Heart right ventricle (tissue), 16 donors: ENCODE measurements at regions of chr7 and their contacts with region 1.

Region 1: GRCh38 chr7:77536413-77537135 is 521 bp upstream of the PTPN12 start:
- DNase-seq: peak; percentile 97 to 99
- ATAC-seq: peak; percentile 91 to 96 (median 94)
- H3K4me3 ChIP-seq: peak overlapping the region; percentile 77 to 100 (median 94)
- H3K27ac ChIP-seq: peak overlapping the region; percentile 48 to 100 (median 99)
- H3K4me1 ChIP-seq: peaks cover 6 to 40% (median 34%) of the 10 kb centered on the region in 9 donors
- H3K27me3 ChIP-seq: no peaks in the 10 kb centered on the region
- CTCF ChIP-seq: peak in 1 of 9 donors; percentile 18

Region 2: DNA sequence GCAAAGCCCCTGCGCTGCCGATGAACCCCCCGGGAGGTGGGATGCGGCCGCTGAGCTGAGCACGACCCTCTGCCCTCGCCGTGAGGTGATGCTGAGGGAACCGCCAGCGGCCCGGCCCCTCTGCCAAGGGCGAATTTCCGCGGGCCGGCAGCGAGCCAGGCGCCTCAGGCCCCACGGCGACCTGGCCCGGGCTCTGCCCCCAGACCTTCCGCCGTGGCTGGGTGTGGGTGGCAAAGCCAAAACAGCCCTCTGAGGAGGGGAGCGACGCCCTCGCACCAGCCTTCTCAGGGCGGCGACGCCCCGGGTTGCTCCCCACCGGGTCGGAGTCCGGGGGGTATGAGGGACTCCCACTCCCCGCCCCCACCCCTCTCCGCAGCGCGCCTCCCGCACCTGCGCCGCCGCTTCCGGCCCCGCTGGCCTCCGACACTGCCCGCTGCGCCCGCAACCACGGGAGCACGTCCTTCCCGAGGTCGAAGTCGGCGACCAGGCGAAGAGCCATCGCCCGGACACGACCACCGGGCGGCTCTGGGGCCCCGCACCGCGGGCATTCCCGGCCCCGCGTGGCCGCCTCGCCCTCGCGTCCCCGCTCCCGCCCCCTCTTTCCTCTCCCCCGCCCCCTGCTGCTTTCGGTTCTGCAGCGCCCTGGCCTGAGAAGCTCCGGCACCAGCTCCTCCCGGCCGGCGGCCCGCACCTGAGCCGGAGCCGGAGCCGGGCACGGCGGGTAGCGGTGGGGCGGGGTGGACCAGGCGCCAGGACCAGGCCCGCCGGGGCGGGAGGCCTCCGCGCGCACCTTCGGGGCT is 120.6 kb before region 1 on chr7 and contains the start of gene GSAP:
- intact Hi-C with region 1: loop called in 1 of 10 experiments (anchors 10 kb)
- DNase-seq: peak; percentile 67
- ATAC-seq: peak; percentile 70 to 91 (median 88)
- H3K4me3 ChIP-seq: peak within 1 kb of the TSS; percentile 73 to 92 (median 86)
- H3K27ac ChIP-seq: peak within 1 kb of the TSS; percentile 68 to 96 (median 87)
- H3K4me1 ChIP-seq: peaks cover 0 to 39% (median 12%) of the 10 kb centered on the region in 9 donors
- H3K27me3 ChIP-seq: no peaks in the 10 kb centered on the region
- CTCF ChIP-seq: peak in 5 of 9 donors; percentile 10 to 40 (median 20)
- total RNA-seq, gene GSAP: 5.2 to 13.5 (median 7.9) TPM

Region 3: GRCh38 chr7:77455324-77455723 is 81.2 kb before region 1 on chr7:
- intact Hi-C with region 1: loop called in 1 of 10 experiments (anchors 10 kb)
- DNase-seq: peak; percentile 19 to 43
- ATAC-seq: peak in 7 of 8 donors; percentile 55 to 93 (median 75)
- H3K4me3 ChIP-seq: no peak overlapping the region
- H3K27ac ChIP-seq: peak overlapping the region in 2 of 10 donors; percentile 2 to 19
- H3K4me1 ChIP-seq: peaks cover 0 to 39% (median 9%) of the 10 kb centered on the region in 9 donors
- H3K27me3 ChIP-seq: no peaks in the 10 kb centered on the region
- CTCF ChIP-seq: no peak

Region 4: DNA sequence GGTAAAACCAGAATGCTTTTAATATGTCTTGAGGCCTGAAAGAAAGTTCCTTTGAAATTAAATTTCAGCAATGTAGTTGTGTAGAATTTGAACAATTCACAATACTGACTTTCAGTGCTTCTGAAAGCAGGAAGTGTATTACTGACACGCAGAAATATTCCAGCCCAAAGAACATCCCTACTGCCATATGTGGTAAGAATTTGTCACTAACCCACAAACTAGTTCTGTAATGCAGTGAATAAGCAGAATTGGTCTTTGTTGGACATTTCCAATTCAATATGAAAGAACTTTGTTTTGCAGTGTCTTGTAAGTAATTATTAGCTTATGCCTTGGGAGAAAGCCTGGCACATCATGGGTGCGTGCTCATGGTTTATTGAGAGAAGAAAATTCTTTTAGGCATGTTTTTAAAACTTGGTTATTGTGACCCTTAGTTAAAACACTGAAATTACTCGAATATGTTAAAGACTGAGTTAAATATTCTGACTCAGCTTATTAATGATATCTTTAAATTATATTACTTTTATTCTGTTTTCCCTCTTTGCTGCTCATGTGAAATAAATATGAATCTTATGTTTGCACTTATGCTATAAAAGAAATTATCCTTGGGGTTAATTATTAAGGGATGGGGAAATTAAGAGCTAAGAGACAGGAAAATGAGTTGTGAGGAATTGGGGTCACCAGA is 33.9 kb after region 1 on chr7:
- intact Hi-C with region 1: loop called in 2 of 10 experiments (anchors 5 kb)
- DNase-seq: no peak
- ATAC-seq: peak in 4 of 8 donors; percentile 54 to 66 (median 59)
- H3K4me3 ChIP-seq: no peak overlapping the region
- H3K27ac ChIP-seq: peak overlapping the region in 3 of 10 donors; percentile 7 to 69 (median 12)
- H3K4me1 ChIP-seq: peaks cover 0 to 63% (median 28%) of the 10 kb centered on the region in 9 donors
- H3K27me3 ChIP-seq: no peaks in the 10 kb centered on the region
- CTCF ChIP-seq: no peak

Region 5: GRCh38 chr7:77600952-77601351 is 64.4 kb after region 1 on chr7:
- intact Hi-C with region 1: loop called in 1 of 10 experiments (anchors 5 kb)
- DNase-seq: no peak
- ATAC-seq: no peak
- H3K4me3 ChIP-seq: no peak overlapping the region
- H3K27ac ChIP-seq: no peak overlapping the region
- H3K4me1 ChIP-seq: peaks cover 0 to 5% (median 0%) of the 10 kb centered on the region in 9 donors
- H3K27me3 ChIP-seq: no peaks in the 10 kb centered on the region
- CTCF ChIP-seq: no peak

Region 6: DNA sequence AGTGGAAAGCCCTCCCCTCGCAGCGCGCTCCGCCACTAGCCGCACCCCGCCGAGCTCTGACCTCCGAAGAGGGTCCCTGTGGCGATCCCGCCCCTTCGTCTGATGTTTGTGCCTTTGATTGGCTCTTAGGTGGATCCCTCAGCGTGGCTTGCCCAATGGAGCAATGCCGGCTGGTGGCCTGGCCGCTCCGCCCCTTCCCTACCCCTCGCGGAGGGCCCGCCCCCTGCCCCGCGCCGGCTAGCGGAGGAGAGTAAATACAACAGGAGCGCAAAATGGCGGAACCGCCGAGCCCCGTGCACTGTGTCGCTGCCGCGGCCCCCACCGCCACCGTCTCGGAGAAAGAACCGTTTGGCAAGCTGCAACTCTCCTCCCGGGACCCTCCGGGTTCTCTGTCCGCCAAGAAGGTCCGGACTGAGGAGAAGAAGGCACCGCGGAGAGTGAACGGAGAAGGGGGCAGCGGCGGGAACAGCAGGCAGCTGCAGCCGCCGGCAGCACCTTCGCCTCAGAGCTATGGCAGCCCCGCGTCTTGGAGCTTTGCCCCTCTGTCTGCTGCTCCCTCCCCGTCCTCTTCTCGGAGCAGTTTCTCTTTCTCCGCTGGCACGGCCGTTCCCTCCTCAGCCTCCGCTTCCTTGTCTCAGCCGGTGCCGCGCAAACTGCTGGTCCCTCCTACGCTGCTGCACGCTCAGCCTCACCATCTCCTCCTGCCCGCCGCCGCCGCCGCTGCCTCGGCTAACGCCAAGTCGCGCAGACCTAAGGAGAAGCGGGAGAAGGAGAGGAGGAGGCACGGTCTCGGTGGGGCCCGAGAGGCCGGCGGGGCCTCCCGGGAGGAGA is 159.8 kb after region 1 on chr7 and contains the start of gene RSBN1L:
- intact Hi-C with region 1: loop called in 1 of 10 experiments (anchors 5 kb)
- DNase-seq: peak; percentile 98 to 99
- ATAC-seq: peak; percentile 98 to 100 (median 99)
- H3K4me3 ChIP-seq: peak within 1 kb of the TSS; percentile 77 to 100 (median 97)
- H3K27ac ChIP-seq: peak within 1 kb of the TSS; percentile 90 to 99 (median 96)
- H3K4me1 ChIP-seq: peaks cover 0 to 64% (median 53%) of the 10 kb centered on the region in 9 donors
- H3K27me3 ChIP-seq: no peaks in the 10 kb centered on the region
- CTCF ChIP-seq: peak; percentile 12 to 64 (median 43)
- total RNA-seq, gene RSBN1L: 7.7 to 11.8 (median 10.0) TPM